ENCODE measurements at regions of chr5 and their contacts with region 1.

Region 1: DNA sequence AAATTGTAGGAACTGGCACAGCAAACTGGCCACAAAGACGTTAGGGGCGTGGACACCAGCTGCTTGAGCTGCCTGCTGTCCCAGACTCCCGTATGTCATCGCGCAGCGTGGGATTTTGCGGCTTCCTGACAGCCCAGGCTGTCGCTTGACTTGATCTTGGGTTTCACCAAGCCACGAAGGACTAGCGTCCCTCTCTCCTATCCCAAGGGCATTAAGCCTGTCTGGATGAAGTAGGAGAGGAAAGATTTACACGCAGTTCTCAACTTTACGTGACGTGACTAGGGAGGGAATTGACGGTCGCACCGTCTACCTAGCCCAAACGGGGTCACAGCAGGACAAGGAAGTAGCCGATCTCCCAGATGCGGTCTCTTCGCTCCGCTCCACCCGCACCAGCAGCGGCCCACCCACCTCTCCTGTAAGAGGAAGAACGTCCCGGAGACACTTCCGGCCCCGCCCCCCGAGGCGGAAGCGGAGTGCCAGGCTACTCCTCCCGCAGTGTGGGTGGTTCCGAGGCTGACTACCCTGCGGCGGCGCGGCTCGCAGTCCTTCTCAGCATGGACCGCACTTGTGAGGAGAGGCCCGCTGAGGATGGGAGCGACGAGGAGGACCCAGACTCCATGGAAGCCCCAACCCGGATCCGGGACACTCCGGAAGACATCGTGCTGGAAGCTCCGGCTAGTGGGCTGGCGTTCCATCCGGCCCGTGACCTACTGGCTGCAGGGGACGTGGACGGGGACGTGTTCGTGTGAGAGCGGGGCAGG is at the start of gene WDR55:
- DNase-seq: peak; percentile 91
- ATAC-seq: peak; percentile 98
- H3K4me3 Mint-ChIP-seq: peak within 1 kb of the TSS; percentile 97
- H3K27ac Mint-ChIP-seq: peak within 1 kb of the TSS; percentile 95
- H3K4me1 Mint-ChIP-seq: peaks cover 30% of the 10 kb centered on the region
- H3K27me3 Mint-ChIP-seq: no peaks in the 10 kb centered on the region
- CTCF ChIP-seq: no peak
- total RNA-seq, gene WDR55: 33.8 and 36.9 TPM in 2 replicates

Region 2: DNA sequence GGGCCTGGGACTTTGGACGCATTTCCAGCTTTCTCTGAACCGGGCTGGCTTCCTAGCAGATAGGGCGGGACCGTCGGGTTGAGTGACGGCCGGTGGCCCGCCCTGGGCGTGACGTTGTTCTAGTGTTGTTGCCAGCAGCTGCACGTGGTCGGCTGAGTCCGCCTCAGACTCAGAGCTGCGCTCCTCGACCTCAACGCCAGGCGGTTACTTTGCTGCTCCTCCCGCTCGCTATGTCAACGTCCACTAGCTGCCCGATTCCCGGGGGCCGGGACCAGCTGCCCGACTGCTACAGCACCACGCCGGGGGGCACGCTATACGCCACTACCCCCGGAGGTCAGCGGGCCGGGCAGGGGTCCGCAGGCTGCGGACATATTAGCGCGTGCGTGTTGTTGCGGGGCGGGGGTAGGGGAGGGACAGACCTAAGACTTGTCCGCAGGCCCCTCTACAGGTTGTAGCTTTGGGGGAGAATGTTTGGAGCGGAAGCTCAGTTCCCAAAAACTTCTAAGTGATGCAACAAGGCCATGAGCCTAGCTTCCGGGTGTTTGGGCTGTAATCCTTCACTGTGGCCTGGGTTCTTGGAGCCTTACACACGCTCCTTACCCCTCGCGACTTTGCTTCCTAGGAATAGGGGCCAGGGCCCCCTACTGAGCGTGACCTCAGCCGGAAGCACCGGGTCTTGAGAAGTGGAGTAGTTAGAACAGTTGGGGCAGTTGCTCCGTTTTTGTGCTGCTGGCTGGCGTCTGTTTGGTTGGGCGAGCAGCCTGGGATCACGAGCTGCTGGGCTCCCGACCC is 116.8 kb before region 1 on chr5 and contains the start of gene EIF4EBP3:
- CTCF ChIA-PET with region 1: no interaction called
- POLR2A ChIA-PET with region 1: interaction called, 14 read pairs
- intact Hi-C with region 1: no loop called
- DNase-seq: peak; percentile 74
- ATAC-seq: peak; percentile 97
- H3K4me3 Mint-ChIP-seq: peak within 1 kb of the TSS; percentile 86
- H3K27ac Mint-ChIP-seq: peak within 1 kb of the TSS; percentile 95
- H3K4me1 Mint-ChIP-seq: peaks cover 28% of the 10 kb centered on the region
- H3K27me3 Mint-ChIP-seq: no peaks in the 10 kb centered on the region
- CTCF ChIP-seq: no peak
- total RNA-seq, gene EIF4EBP3: 14.4 and 18.2 TPM in 2 replicates

Region 3: GRCh38 chr5:140557136-140557805 is 107.3 kb before region 1 on chr5 and contains the start of gene SRA1:
- CTCF ChIA-PET with region 1: no interaction called
- POLR2A ChIA-PET with region 1: no interaction called
- intact Hi-C with region 1: loop called (anchors 2 kb)
- DNase-seq: peak; percentile 88
- ATAC-seq: peak; percentile 97
- H3K4me3 Mint-ChIP-seq: peak within 1 kb of the TSS; percentile 93
- H3K27ac Mint-ChIP-seq: peak within 1 kb of the TSS; percentile 89
- H3K4me1 Mint-ChIP-seq: peaks cover 55% of the 10 kb centered on the region
- H3K27me3 Mint-ChIP-seq: no peaks in the 10 kb centered on the region
- CTCF ChIP-seq: no peak
- total RNA-seq, gene SRA1: 41.1 and 41.8 TPM in 2 replicates

Region 4: DNA sequence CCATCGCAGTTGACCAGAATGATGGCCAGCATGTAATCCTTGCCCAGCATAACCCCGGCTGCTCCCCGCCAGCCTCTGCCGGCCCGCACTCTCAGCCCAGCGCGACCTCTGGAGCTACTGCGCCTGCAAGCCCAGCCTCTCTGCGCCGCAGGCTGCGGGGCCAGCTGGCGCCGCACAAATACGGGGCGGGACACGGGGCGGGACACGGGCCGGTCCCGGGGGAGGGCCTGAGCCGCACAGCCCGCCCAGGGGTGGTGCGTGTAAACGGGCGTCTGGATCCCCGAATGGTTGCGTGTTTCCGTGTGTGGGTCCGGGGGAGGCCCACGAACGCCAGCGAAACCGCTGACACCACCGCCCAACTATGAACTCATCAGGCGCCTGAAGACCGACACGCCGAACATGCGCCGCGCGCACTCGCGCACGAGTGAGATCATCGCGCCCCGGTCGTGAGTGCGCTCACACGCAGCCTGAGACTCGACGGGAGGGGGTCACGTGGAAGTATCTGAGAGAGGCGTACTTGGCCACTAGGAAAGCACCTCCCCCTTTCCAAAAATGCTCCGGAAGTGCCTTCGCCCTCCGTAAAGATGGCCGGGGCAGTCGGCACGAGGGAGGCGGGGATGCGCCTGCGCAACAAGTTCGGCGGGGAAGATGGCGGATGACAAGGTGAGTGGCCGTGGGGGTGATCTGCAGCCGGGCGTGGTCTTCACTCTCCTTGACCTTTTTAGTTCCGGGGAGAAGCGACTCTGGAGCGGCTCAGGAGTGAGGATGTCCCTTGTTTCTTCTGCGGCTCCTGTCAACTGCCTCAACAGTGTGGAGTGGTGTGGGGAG is 100.1 kb before region 1 on chr5 and contains the starts of genes APBB3 and SLC35A4:
- CTCF ChIA-PET with region 1: no interaction called
- POLR2A ChIA-PET with region 1: interaction called, 3 read pairs
- intact Hi-C with region 1: loop called (anchors 1 kb)
- DNase-seq: peak; percentile 89
- ATAC-seq: peak; percentile 90
- H3K4me3 Mint-ChIP-seq: peak within 1 kb of the TSS; percentile 98
- H3K27ac Mint-ChIP-seq: peak within 1 kb of the TSS; percentile 90
- H3K4me1 Mint-ChIP-seq: peaks cover 57% of the 10 kb centered on the region
- H3K27me3 Mint-ChIP-seq: no peaks in the 10 kb centered on the region
- CTCF ChIP-seq: no peak
- total RNA-seq, gene APBB3: 36.0 and 37.5 TPM in 2 replicates
- total RNA-seq, gene SLC35A4: 76.0 and 77.9 TPM in 2 replicates

Region 5: DNA sequence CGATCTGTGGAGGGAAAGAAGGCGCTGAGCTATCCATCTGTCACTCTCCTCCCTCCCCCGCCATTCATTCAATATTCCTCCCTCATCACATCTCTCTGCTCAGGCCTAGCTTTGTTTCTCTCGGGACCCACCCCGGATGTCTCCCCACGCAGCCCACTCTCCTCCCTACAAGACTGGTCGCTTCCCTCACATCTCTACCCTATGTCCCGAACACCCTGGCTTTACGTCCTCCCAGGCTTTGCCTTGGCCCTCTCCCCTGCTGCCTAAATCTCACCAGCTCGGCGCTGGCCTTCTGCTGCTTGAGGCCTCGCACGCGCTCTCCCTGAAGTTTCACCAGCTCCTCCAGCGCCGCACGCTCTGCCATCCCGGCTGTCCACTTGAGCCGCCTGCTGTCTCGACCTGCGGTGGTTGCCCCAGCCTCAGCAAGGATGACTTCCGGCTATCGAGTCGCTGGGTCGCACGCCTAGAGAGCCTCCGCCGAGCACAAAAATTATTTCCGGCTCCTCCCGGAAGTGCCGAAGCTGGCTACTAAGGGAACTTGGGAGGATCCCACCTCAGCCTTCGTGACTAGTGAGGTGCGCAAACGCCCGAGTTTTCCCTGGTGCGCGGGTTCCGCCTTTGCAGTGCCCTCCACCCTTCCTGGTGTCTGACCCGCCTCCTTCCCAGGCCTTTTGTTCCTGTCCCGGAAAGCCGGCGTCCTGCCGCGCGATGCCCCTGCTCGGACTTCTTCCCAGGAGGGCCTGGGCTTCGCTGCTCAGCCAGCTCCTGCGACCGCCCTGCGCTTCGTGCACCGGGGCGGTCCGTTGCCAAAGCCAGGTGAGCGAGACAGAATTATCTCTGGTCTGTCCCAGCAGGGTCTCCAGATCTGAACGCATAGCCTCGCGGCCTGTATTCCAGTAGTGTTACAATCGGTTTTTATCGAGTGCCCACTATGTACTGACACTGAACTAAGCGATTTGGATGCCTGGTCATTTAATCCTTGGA is 26.7 kb after region 1 on chr5 and contains the starts of genes HARS1 and HARS2:
- CTCF ChIA-PET with region 1: no interaction called
- POLR2A ChIA-PET with region 1: interaction called, 23 read pairs
- intact Hi-C with region 1: loop called (anchors 1 kb)
- DNase-seq: peak; percentile 70
- ATAC-seq: peak; percentile 95
- H3K4me3 Mint-ChIP-seq: peak within 1 kb of the TSS; percentile 100
- H3K27ac Mint-ChIP-seq: peak within 1 kb of the TSS; percentile 97
- H3K4me1 Mint-ChIP-seq: peaks cover 31% of the 10 kb centered on the region
- H3K27me3 Mint-ChIP-seq: no peaks in the 10 kb centered on the region
- CTCF ChIP-seq: no peak
- total RNA-seq, gene HARS1: 78.2 and 84.0 TPM in 2 replicates
- total RNA-seq, gene HARS2: 45.7 and 48.5 TPM in 2 replicates

Region 6: GRCh38 chr5:140700177-140701144 is 35.9 kb after region 1 on chr5 and contains the start of gene ZMAT2:
- CTCF ChIA-PET with region 1: no interaction called
- POLR2A ChIA-PET with region 1: interaction called, 10 read pairs
- intact Hi-C with region 1: loop called (anchors 2 kb)
- DNase-seq: peak; percentile 77
- ATAC-seq: peak; percentile 100
- H3K4me3 Mint-ChIP-seq: peak within 1 kb of the TSS; percentile 98
- H3K27ac Mint-ChIP-seq: peak within 1 kb of the TSS; percentile 92
- H3K4me1 Mint-ChIP-seq: peaks cover 25% of the 10 kb centered on the region
- H3K27me3 Mint-ChIP-seq: no peaks in the 10 kb centered on the region
- CTCF ChIP-seq: no peak
- total RNA-seq, gene ZMAT2: 67.8 and 70.2 TPM in 2 replicates